ENCODE measurements at regions of chr11 and their contacts with region 1.

Region 1: GRCh38 chr11:95764267-95764898 is 25.2 kb downstream of the FAM76B start:
- DNase-seq: no peak

Region 2: GRCh38 chr11:94973099-94973968 is 791.0 kb before region 1 on chr11 and contains the starts of genes CWC15 and KDM4D:
- intact Hi-C with region 1: loop called (anchors 10 kb)
- DNase-seq: peak; percentile 92 to 99 (median 96)

Region 3: GRCh38 chr11:95067039-95067840 is 697.1 kb before region 1 on chr11:
- intact Hi-C with region 1: loop called (anchors 10 kb)
- DNase-seq: peak; percentile 73 to 97 (median 84)

Region 4: DNA sequence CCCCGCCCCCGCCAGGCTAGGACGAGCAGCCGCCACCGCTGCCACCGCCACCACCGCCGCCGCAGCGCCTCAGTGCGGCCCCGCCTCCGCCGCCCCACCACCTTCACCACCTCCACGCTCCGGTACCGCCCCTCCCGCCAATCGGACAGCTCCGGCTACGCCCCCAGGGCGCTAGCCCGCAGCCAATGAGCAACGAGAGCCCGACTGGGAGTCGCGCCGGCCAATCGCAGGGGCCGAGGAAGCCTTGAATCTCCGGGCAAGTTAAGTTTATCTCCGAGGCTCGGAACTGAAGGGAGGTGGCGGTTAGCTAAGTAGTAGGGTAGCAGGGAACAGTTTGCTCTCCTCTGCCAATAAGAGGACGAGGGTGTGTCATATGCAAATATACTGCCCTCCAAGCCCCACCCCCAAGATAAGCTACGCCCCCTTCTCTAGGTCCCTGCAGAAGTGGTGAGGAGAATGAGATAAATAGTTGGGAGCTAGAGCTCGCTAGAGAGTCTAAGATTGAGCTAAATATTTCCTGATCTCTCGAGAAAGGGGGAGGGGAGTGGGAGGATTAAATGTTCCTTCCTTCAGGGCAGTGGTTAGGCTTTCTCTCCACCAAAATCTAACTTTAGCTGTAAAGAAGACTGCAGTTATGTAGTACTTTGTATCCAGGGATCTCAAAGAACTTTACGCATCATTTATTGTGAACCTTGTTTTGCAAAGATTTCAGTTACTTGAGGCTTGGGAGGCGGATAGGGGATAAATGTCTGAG is 533.1 kb before region 1 on chr11 and contains the start of gene SESN3:
- intact Hi-C with region 1: loop called (anchors 10 kb)
- DNase-seq: peak; percentile 94 to 100 (median 99)

Region 5: GRCh38 chr11:95727620-95728019 is 36.8 kb before region 1 on chr11:
- intact Hi-C with region 1: loop called (anchors 5 kb)
- DNase-seq: peak in 4 of 10 donors; percentile 11 to 77 (median 23)

Region 6: DNA sequence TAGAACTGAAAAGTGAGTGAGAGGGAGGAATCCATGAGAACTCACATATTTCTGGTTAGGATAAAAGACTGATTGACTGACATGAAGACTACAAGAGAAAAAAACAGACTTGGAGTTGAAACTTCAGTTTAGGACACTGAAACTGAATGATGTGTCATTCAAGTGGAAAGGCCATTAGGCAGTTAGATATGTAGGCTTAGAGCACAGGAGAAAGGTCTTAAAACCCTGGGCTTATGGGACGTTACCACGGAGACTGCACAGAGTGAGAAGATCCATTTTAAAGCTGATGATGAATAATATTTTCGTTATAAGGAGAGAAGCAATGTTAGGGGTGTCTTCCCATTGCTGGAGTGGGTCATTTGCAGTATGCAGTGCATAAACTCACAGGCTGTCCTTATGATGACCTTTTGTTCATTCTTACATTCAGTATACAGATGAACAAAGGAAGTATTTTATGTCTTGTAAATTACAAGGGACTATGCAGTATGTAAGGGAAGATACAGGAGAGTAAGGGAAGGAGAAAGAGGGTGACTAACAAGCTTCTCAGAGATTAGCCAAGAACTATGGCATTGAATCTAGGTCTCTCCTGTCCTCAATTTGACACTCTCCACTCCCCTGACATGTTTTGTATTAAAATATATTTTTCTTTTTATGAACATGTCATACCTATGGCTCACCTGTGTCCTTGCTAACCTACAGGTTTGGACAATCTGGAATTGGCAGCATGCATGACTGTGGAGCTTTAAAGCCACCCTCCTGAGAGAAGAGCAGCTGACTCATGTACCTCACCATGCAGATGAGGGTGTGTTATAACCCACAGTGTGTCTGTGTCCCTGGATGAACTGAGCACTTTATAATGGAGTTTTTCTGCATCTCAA is 514.9 kb after region 1 on chr11:
- intact Hi-C with region 1: no loop called
- DNase-seq: no peak